Head of caudate nucleus (tissue), 42 donors: ENCODE measurements at regions of chr6 and their contacts with region 1.

Region 1: DNA sequence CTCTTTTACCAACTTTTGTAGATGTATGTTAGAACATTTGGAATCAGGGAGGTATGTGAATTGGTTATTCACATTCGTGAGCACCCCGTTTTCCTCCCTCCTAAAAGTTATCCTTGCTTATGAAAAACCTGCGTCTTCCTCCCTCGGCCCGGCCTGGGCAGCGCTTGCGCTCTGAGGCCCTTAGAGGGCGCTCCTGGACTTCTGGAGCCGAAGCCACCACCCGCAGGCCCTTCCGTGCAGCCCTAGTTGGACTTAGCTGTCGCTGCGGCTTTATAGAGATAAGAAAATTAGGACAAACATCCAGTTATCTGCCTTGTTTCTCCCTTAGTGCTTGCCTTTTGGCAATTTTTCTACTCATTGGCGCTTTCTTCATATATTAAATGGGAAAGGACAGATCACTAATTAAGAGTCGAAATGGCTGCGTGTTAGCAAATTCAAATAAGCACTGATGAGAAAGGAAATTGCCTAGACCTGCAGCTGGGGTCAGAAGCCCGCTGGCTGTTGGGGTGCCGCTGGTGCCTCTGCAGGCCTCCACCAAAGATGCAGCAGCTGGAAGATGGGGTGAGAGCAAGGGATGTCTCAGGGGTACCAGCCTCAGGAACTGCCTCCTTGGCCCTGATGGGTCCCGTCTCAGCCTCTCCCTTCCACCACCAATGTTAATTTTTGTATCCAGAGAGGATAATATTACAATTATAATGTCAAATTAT is 5.2 kb downstream of the FNDC1 start:
- DNase-seq: peak in 41 of 42 donors; percentile 39 to 86 (median 69)

Region 2: GRCh38 chr6:159646733-159647132 is 472.3 kb after region 1 on chr6:
- intact Hi-C with region 1: loop called (anchors 10 kb)
- DNase-seq: no peak